Tibial artery (tissue), 4 donors: ENCODE measurements at regions of chr17 and their contacts with region 1.

Region 1: DNA sequence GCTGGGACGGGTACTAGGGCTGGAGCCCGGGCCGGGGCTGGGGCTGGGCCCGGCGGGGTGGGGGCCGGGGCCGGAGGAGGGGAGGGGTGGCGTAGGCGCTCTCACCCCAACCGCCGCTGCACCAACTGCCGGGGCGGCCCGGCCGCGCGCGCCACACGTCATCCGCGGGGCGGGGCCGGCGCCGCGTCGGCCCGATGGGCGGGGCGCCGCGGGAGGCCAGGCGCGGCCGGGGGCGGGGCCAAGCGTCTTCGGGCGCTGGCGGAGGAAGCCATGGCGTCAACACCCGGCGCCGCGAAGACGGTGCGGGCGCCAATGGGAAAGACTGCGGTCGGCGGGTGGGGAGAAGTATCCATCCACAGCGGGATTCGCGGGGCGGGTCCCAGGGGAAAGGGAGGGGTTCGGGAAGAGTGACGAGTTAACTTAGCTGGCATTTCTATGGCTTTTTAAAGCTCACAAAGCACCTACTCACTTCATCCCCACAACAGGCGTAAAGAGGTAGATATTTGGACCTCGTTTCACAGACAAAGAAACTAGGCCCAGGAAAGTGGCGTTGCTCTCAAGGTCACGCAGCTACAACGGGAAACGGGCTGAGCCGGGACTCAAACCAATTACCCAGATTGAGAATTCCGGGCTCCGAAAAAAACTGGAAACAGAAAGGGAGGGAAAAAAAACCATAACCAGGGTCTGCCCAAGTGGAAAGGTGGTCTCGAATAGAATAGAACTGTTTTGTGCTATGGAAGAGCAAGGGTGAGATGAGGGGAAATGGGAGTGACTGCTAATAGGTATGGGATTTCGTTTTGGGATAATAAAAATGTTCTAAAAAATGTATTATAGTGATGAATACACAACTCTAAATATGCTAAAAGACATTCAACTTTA is at the start of gene SPAG9:
- DNase-seq: peak; percentile 97 to 99
- H3K4me3 ChIP-seq: peak within 1 kb of the TSS; percentile 86 to 98
- H3K27ac ChIP-seq: peak within 1 kb of the TSS; percentile 97 to 99
- H3K4me1 ChIP-seq: peaks cover 0 to 41% (median 30%) of the 10 kb centered on the region in 4 donors
- H3K27me3 ChIP-seq: no peaks in the 10 kb centered on the region
- CTCF ChIP-seq: no peak

Region 2: DNA sequence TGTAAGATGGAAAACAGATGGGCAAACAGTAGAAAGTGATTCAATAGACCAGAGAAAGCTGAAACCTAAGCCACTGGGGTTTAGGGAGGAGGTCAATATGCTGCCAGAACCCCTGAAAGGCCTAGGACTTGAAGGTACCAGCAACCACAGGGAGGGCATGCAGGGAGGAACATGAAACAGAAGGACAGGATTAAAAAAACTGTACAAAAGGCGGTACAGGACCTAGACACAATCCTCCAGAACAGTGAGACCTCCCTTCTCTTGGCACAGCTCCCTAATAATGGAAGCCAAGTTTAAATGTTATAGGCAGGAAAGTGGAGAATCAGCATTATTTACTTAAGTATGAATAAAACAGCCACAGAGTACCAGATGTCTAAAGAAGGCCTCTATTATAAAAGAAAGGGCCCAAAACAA is 105.8 kb before region 1 on chr17:
- intact Hi-C with region 1: no loop called
- DNase-seq: no peak
- H3K4me3 ChIP-seq: no peak overlapping the region
- H3K27ac ChIP-seq: no peak overlapping the region
- H3K4me1 ChIP-seq: no peaks in the 10 kb centered on the region
- H3K27me3 ChIP-seq: no peaks in the 10 kb centered on the region
- CTCF ChIP-seq: no peak

Region 3: DNA sequence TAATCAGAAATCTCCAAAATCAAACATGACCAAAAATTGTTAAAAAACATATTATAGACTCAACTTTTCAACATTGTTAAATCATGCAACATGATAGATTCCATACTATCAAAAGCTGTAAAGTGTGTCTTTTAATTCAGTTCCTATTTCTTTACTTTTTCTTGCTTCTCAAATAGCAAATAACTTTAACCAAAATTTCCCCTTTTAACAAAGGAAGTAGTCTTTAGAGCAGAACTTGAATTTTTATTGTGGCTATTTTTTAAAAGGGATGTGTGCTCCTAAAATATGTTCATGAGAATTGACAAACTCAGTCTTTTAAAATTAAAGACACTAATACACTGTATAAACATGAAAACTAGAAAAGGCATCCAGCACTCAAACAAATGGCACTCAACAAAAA is 49.4 kb before region 1 on chr17:
- intact Hi-C with region 1: no loop called
- DNase-seq: no peak
- H3K4me3 ChIP-seq: no peak overlapping the region
- H3K27ac ChIP-seq: no peak overlapping the region
- H3K4me1 ChIP-seq: peaks cover 0 to 20% (median 4%) of the 10 kb centered on the region in 4 donors
- H3K27me3 ChIP-seq: no peaks in the 10 kb centered on the region
- CTCF ChIP-seq: no peak

Region 4: DNA sequence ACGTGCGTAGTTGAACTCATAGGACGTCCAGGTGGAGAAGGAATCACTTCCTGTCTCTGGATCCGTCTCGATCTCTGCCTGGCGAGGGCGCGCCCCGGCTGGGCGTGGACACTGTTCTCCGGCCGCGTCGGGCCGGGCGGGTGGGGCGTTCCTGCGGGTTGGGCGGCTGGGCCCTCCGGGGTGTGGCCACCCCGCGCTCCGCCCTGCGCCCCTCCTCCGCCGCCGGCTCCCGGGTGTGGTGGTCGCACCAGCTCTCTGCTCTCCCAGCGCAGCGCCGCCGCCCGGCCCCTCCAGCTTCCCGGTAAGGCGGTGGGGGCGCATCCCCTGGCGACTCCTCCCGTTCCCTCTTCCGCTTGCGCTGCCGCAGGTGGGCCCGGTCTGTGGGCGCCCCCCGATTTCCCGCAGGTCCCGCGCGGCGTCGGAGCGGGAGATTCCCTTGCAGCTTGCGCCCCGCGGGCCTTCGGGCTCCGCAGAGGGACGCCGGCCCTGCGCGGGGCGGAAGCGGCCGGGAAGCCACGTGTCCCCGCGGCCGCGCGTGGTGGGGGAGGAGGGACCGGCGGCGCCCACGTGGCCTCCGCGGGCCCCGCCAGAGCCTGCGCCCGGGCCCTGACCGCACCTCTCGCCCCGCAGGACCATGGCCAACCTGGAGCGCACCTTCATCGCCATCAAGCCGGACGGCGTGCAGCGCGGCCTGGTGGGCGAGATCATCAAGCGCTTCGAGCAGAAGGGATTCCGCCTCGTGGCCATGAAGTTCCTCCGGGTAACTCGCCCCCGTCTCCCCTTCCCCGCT is 45.4 kb after region 1 on chr17 and contains the start of gene NME2:
- intact Hi-C with region 1: loop called (anchors 5 kb)
- DNase-seq: peak; percentile 91 to 95
- H3K4me3 ChIP-seq: peak within 1 kb of the TSS; percentile 98 to 99
- H3K27ac ChIP-seq: peak within 1 kb of the TSS; percentile 88 to 98
- H3K4me1 ChIP-seq: peaks cover 0 to 21% (median 15%) of the 10 kb centered on the region in 4 donors
- H3K27me3 ChIP-seq: no peaks in the 10 kb centered on the region
- CTCF ChIP-seq: no peak